Cardiac septum (tissue), 1 donor: ENCODE measurements at regions of chr10 and their contacts with region 1.

Region 1: GRCh38 chr10:511101-511848 is 178.2 kb downstream of the DIP2C start:
- DNase-seq: peak; percentile 94

Region 2: GRCh38 chr10:443253-443858 is 67.9 kb before region 1 on chr10:
- intact Hi-C with region 1: no loop called
- DNase-seq: no peak

Region 3: DNA sequence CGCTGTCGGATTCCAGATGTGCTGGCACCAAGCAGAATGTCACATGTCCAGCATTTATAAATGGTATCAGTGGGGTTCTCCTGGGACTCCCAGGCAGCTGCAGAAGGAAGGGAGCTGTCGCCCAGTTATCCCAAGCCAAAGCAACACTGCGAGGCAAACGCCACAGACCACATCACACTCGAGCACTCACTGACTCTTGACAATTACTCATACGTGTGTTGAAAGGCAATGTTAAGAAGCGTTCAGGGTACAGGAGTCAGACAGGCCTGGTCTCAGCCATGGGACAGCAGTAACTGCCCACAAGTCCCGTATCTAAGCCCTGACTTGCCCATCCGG is 64.8 kb after region 1 on chr10:
- intact Hi-C with region 1: no loop called
- DNase-seq: no peak

Region 4: GRCh38 chr10:615583-616152 is 104.4 kb after region 1 on chr10:
- intact Hi-C with region 1: loop called (anchors 10 kb)
- DNase-seq: no peak

Region 5: DNA sequence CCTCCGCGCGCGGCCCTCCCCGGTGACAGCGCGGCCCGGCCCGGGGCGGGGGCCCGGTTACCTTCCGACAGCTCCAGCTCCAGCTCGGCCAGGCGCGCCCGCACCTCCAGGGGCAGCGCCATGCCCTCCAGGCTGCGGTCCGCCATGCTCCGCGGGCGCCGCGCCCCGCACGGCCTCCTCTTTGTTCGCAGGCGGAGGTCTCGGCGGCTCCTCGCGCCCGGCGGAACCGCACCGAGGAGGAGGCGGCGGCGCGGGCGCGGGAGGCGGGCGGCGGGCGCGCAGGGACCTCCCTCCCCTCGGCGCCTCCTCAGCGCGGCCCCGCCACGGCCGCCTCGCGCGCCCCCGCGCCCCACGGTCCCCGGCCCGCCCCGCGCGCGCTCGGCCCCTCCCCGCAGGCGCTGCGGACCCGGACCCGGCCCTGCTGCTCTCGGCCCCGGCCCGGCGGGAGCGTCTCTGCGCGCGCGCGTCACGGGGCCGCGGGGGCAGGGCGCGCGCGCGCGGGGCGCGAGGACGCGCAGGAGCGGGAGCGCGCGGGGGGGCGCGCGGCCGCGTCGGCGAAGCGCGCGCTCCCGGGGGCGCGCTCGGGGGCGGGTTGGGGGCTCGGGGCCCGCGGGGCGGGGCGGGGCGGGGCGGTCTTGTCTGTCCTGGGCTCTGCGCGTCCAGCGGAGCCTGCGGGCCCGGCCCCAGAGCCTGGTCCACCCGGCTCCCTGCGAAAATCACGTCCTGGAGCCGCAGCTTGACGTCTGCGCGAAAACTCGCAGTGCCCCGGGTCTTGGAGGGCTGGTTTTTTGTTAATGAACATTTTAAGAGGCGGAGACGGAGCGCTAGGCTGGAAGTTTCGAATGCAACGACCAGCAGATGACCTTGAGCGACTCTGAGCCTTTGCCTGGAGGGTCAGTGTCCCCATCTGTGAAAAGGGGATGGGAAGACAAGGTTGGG is 178.4 kb after region 1 on chr10 and contains the start of gene DIP2C:
- intact Hi-C with region 1: loop called (anchors 2 kb)
- DNase-seq: no peak
- total RNA-seq, gene DIP2C: 28.8 TPM

Region 6: DNA sequence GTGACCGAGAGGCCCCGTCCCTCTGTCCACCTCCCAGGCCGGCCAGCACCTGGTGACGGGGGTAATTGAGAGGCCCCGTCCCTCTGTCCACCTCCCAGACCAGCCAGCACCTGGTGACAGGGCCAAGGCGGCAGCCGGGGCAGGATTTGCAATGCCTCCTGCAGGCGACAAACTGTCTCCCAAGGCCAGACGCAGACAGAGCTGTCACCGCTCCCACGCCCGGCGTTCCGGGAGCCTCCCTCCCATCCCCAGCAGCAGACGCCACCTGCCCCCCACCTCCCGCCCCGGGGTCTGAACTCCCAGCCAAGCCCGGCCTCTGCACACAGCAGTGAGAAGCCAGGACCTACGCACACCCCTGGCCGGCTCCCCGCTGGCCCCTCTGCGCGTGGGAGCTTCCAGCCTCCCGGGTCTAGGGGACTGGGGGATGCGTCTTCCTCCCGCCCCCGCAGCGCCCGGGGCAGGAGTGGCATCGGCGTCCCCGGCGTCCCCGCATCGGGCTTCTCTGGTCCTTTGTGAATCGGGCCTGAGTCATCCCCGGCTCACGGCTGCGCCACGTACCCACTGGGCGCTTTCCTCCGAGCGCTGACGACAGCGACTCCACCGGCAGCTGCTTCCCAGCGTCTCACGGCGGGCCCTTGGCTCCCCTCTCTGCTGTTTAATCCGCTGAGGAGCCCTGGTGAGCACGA is 273.3 kb after region 1 on chr10:
- intact Hi-C with region 1: loop called (anchors 5 kb)
- DNase-seq: no peak